ENCODE measurements at regions of chr3 and their contacts with region 1.

Region 1: DNA sequence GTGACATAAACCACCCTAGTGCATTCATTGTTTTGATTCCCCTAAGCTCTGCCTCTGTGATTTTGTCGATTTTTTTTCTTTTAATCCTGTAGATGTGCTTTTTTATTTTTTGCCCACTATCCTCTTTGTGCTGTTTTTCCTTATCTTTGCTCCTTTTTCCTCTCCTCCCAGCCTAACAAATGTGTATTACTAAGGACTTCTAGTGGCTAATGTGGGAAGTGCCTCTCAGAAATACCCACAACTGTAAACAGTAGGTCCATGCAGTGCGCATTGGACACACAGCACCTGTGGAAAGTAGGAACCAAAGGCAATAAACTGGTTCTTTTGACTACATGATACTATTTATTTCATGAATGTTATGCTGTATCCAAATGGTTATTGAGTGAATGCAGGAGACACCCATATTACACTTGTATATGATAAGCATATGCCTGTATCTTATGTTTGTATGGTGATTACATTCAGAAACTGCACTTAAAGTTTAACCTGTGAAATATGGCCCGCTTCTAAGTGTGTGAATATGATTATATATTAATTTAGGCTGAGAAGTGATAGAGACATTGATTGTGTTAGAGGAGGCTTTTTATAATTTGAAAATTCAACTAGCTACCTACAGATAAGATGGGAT is 147.8 kb downstream of the PLCL2 start:
- DNase-seq: no peak
- H3K4me3 ChIP-seq: no peak overlapping the region
- H3K27ac ChIP-seq: no peak overlapping the region
- H3K4me1 ChIP-seq: peaks cover 67% of the 10 kb centered on the region
- H3K27me3 ChIP-seq: no peaks in the 10 kb centered on the region
- CTCF ChIP-seq: peak; percentile 75

Region 2: DNA sequence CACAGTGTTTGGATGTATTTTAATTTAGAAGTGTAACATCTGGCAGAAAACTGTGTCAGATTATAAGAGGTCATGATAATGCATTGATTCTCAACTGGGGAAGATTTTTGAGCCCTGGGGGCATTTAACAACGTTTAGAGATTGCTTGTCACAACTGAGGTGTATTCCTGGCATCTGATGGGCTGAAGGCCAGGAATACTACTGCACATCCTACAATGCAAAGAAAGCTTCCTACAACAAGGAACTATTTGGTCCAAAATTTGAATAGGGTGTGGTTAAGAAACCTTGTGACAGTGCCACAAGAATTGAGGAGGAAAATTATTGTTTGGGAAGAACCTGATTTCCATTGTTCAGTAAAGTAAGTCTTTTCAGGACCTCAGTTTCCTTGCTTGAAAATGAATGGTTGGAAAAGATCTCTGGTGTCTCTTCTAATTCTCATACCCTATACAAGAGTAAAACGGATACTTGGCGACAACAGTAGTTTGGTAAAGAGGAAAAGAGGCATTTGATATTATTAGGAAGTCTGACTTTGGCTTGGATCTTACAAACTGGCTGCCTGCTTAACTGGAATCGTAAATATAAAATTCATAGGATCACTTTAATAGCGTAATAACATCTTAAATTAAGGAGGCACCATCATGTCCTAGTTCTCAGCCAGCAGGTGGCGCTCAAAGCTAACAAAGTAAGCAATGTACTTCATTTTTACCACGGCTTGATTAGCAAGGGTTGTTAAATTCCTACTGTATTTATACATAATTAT is 431.6 kb before region 1 on chr3:
- intact Hi-C with region 1: loop called (anchors 10 kb)
- DNase-seq: peak; percentile 79
- H3K4me3 ChIP-seq: no peak overlapping the region
- H3K27ac ChIP-seq: no peak overlapping the region
- H3K4me1 ChIP-seq: peaks cover 7% of the 10 kb centered on the region
- H3K27me3 ChIP-seq: no peaks in the 10 kb centered on the region
- CTCF ChIP-seq: peak; percentile 92

Region 3: DNA sequence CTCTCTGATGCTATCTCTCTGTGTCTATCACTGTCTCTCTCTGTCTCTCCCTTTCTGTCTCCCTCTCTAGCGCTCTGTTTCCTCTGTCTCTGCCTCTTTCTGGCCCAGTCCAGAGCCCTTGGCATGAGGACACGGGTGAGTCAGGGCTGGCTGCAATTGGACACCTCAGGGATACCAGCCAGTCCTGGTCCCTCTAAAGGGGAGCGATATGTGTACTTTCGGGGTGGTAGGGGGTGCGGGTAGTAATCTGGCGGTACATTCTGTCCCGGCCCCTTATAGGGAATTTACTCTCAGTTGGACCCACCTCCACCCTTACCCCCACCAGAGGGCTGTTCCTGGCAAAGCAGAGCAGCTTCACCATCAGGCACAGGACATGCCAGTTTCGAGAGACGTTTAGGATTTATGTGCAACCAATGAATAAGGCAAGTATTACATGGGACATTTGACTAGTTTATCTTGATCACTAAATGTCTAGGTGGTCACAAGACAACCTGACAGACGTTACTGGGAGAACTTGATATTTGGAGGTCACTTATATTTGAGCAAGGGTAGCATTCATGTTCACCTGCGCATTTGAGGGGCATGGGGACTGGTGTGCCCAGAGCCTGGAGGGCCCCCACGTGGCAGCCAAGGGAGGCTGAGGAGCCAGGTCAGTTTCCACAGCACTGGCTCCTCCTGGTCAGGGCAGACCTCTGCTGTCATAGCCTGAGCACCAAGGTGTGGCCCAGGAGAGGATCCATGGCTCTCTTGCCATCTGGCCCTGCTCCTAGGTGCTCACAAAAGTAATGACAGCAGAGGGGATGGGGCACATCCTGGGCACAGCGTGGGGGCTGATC is 108.4 kb after region 1 on chr3:
- intact Hi-C with region 1: no loop called
- DNase-seq: peak; percentile 71
- H3K4me3 ChIP-seq: peak overlapping the region; percentile 44
- H3K27ac ChIP-seq: peak overlapping the region; percentile 82
- H3K4me1 ChIP-seq: peaks cover 34% of the 10 kb centered on the region
- H3K27me3 ChIP-seq: no peaks in the 10 kb centered on the region
- CTCF ChIP-seq: peak; percentile 42

Region 4: GRCh38 chr3:17233398-17233800 is 200.9 kb after region 1 on chr3:
- intact Hi-C with region 1: loop called (anchors 10 kb)
- DNase-seq: no peak
- H3K4me3 ChIP-seq: no peak overlapping the region
- H3K27ac ChIP-seq: no peak overlapping the region
- H3K4me1 ChIP-seq: peaks cover 54% of the 10 kb centered on the region
- H3K27me3 ChIP-seq: no peaks in the 10 kb centered on the region
- CTCF ChIP-seq: peak; percentile 80

Measured in left ventricle myocardium inferior (tissue), 1 donor.